ENCODE measurements at regions of chr15 and their contacts with region 1.

Region 1: DNA sequence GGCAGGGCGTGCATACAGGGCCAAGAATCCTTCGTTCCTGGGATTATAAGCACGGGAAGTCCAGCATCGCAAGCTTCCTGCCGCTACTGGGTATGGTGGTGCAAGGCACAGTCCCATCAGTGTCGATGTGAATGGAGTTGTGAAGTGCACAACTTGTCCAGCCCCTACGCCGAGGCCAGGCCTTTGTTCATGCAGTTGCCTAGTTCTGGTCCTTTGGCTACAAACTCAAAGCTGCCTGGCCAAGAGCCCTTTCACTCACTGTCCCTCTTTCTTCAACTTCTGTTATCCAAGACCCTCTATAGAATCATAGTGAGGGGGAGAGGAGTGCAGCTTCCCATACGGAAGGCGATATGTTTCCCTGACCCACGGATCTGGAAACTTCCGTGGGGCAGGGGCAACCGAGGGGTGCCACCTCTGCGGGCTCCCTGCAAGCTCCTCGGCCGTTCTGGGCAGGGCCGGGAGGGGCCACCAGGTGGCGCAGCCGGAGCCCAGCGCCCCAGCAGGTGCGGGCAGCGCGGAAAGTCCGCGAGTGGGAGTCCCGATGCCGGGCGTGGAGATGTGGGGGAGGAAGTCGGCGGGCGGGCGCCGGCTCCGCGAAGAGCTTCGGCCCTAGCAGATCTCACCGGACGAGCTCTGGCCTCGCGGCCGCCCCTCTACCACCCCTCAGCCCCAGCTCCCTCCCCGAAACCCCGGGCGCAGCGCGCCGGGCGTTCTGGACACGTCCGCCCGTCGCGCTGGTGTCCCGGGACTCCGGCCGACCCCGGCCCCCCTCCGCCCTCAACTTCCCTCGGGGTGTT is 693 bp downstream of the RASGRP1 start:
- DNase-seq: peak; percentile 92
- H3K4me3 Mint-ChIP-seq: peak overlapping the region; percentile 95
- H3K27ac Mint-ChIP-seq: peak overlapping the region; percentile 99
- H3K4me1 Mint-ChIP-seq: peaks cover 53% of the 10 kb centered on the region
- H3K27me3 Mint-ChIP-seq: no peaks in the 10 kb centered on the region

Region 2: DNA sequence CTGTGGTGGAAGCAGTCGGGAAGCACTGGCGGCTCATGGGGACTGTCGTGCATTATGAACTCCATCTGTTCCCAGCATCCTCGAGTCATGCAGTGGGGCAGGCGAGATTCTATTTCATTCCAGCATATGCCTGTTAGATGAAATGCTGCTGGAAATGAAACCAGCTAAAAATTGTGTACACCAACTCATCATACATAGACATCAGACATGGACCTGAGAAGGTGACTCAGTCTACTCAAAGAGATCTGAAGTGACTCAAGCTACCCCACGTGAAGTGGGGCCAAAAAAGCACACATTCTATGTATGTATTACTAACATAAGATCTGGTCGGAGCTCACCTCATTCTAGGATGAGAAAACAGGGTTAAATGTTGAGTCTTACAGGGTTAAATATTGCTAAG is 157.5 kb before region 1 on chr15:
- CTCF ChIA-PET with region 1: no interaction called
- POLR2A ChIA-PET with region 1: no interaction called
- intact Hi-C with region 1: no loop called
- DNase-seq: no peak
- H3K4me3 Mint-ChIP-seq: no peak overlapping the region
- H3K27ac Mint-ChIP-seq: no peak overlapping the region
- H3K4me1 Mint-ChIP-seq: no peaks in the 10 kb centered on the region
- H3K27me3 Mint-ChIP-seq: peaks cover 8% of the 10 kb centered on the region

Region 3: DNA sequence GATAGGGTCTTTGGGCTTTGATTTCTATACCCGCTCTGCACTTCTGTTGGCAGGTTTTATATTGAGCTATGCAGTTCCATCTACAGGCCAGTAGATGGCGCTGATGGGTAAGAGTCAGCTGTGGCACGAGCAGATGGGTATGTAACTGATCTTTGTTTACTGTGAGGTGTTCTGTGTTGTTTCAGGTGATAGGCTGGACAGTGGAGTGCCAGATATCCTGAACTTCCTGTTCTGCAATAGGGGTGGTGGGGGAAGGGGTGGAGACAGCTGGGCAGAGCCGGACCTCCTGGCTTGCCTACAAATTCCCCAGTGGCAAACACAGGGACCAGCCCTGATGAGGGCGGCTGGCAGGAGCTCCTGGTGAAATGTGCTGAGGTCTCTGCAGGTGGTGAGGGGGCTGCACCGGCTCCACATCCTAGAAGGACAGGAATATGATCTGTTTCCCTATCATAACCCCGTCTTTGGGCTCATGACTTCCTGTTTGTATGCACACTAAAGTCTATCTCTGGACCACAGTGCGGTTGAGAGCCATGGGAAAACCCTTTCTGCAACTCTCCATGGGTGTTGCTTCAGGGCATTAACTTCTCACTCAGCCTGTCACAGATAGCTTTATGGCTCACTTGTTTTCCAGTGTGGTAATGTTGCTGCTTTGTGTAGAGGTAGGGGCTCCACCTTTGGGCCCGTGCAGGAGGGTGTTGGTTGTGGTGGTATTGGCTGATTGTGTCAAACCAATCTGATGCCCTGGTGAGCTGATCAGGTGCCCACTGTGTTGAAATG is 123.4 kb before region 1 on chr15:
- CTCF ChIA-PET with region 1: interaction called, 11 read pairs
- POLR2A ChIA-PET with region 1: no interaction called
- intact Hi-C with region 1: no loop called
- DNase-seq: peak; percentile 60
- H3K4me3 Mint-ChIP-seq: no peak overlapping the region
- H3K27ac Mint-ChIP-seq: peak overlapping the region; percentile 6
- H3K4me1 Mint-ChIP-seq: peaks cover 5% of the 10 kb centered on the region
- H3K27me3 Mint-ChIP-seq: peaks cover 11% of the 10 kb centered on the region

Region 4: DNA sequence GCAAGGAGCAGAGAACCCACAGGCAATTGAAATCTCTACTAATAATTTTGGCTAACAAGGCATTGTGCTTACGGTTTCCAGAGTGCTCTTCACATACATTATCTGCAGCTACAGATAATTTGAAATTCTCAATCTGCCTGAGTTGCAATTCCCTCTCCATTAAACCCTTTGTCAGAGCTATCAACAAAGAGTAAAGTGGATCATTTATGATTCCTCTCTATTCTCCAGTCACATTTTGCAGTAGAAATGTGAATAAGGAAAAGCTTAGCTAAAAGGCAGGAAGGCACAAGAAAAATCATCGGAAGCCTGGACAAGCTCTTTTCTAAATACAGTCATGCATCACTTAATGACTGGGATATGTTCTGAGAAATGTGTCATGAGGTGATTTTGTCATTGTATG is 60.4 kb before region 1 on chr15:
- CTCF ChIA-PET with region 1: interaction called, 16 read pairs
- POLR2A ChIA-PET with region 1: interaction called, 4 read pairs
- intact Hi-C with region 1: no loop called
- DNase-seq: no peak
- H3K4me3 Mint-ChIP-seq: no peak overlapping the region
- H3K27ac Mint-ChIP-seq: peak overlapping the region; percentile 19
- H3K4me1 Mint-ChIP-seq: peaks cover 41% of the 10 kb centered on the region
- H3K27me3 Mint-ChIP-seq: no peaks in the 10 kb centered on the region

Region 5: GRCh38 chr15:38610748-38611147 is 46.8 kb after region 1 on chr15:
- CTCF ChIA-PET with region 1: interaction called, 154 read pairs
- POLR2A ChIA-PET with region 1: interaction called, 394 read pairs
- intact Hi-C with region 1: loop called (anchors 1 kb)
- DNase-seq: peak; percentile 80
- H3K4me3 Mint-ChIP-seq: peak overlapping the region; percentile 37
- H3K27ac Mint-ChIP-seq: peak overlapping the region; percentile 99
- H3K4me1 Mint-ChIP-seq: peaks cover 83% of the 10 kb centered on the region
- H3K27me3 Mint-ChIP-seq: no peaks in the 10 kb centered on the region

Region 6: DNA sequence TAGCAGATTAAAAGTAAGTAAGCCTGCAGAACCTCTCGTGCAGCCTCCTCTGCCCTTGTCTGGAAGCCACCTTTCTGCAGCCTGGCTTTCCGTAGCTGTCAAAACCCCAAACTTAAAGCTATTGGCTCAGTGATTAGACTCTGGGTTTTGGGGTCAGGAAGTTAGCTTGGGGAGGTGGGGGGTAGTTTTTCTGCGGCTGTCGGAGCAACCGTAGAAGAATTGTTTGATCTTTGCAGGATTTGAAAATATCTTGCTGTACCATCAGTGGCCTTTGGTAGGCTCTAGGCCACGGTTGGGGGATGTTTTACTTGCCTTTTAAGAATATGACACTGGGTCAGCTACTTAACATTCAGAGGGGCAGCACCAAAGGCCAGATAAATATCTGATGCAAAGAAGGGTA is 89.1 kb after region 1 on chr15:
- CTCF ChIA-PET with region 1: interaction called, 32 read pairs
- POLR2A ChIA-PET with region 1: interaction called, 28 read pairs
- intact Hi-C with region 1: loop called (anchors 1 kb)
- DNase-seq: peak; percentile 83
- H3K4me3 Mint-ChIP-seq: peak overlapping the region; percentile 77
- H3K27ac Mint-ChIP-seq: peak overlapping the region; percentile 93
- H3K4me1 Mint-ChIP-seq: peaks cover 77% of the 10 kb centered on the region
- H3K27me3 Mint-ChIP-seq: no peaks in the 10 kb centered on the region

Region 7: DNA sequence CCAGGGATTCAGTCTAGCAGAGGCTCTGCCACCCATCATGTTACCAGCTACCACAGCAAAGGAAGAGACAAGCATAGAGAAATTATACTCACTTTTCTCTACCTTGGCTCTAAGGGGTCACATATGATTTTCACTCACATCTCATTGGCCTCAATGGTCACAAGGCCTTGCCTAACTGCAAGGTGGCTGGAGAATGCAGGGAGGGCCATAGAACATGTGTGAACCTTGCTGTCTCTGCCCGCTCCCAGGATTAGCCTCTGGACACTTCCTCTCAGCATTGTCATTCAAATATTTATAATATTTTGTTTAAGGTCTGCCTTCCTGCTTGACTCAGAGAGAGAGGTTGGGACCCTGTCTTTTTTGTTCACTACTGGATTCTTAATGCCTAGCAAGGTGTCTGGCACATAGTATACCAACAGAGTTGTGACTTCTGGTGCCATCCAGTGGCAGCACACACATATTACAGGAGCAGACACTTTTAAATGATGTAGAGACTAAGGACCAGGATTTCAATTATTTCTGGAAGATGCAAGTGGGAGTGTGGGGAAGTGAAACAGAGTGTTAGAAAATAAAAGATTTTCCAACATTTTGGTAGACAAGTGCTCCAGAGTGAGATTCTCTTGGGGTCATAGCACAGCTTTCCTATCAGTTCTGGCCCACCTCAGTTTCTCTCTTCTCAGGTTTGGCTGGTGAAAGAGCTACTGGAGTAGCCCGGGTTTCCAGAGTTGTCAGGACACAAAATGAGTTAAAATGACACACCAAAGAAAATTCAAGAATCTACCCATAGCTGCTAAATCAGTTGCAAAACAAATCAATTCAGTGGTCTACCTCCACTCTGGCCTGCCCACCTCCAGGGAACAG is 119.7 kb after region 1 on chr15:
- CTCF ChIA-PET with region 1: interaction called, 551 read pairs
- POLR2A ChIA-PET with region 1: interaction called, 307 read pairs
- intact Hi-C with region 1: loop called (anchors 1 kb)
- DNase-seq: peak; percentile 84
- H3K4me3 Mint-ChIP-seq: peak overlapping the region; percentile 5
- H3K27ac Mint-ChIP-seq: peak overlapping the region; percentile 92
- H3K4me1 Mint-ChIP-seq: peaks cover 71% of the 10 kb centered on the region
- H3K27me3 Mint-ChIP-seq: no peaks in the 10 kb centered on the region

Region 8: DNA sequence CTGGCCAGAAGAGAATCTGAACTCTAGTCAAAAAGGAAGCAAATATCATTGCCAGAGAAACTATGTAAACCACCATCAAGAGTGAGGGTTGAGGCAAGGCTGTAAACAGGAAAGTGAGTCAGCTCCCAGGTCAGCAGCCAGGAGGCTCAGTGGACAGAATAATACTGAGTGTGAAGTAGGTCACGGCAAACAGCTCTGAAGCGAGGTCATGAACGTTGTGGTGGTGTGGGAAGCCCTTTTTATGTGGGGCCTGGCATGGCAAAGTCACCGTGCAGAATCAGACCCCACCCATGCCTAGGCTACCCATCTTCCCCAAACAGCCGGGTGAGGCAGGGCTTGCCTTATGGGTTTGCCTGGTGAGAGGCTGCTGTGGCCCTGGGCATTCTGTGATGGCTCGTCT is 1060.9 kb after region 1 on chr15:
- CTCF ChIA-PET with region 1: no interaction called
- POLR2A ChIA-PET with region 1: no interaction called
- intact Hi-C with region 1: loop called (anchors 2 kb)
- DNase-seq: peak; percentile 83
- H3K4me3 Mint-ChIP-seq: peak overlapping the region; percentile 65
- H3K27ac Mint-ChIP-seq: peak overlapping the region; percentile 96
- H3K4me1 Mint-ChIP-seq: peaks cover 75% of the 10 kb centered on the region
- H3K27me3 Mint-ChIP-seq: no peaks in the 10 kb centered on the region